Gastrocnemius medialis (tissue), 4 donors: ENCODE measurements at regions of chr10 and their contacts with region 1.

Region 1: GRCh38 chr10:86803156-86803555 is 46.7 kb downstream of the BMPR1A start:
- DNase-seq: no peak
- ATAC-seq: no peak
- H3K4me3 ChIP-seq: no peak overlapping the region
- H3K27ac ChIP-seq: no peak overlapping the region
- H3K4me1 ChIP-seq: peaks cover 28 to 37% of the 10 kb centered on the region in 2 donors
- H3K27me3 ChIP-seq: no peaks in the 10 kb centered on the region
- CTCF ChIP-seq: no peak
- POLR2A ChIP-seq: no peak

Region 2: GRCh38 chr10:86400705-86401587 is 402.2 kb before region 1 on chr10:
- in situ Hi-C with region 1: no loop called
- intact Hi-C with region 1: no loop called
- DNase-seq: no peak
- ATAC-seq: peak in 1 of 2 donors; percentile 10
- H3K4me3 ChIP-seq: peak overlapping the region; percentile 56 to 92 (median 67)
- H3K27ac ChIP-seq: peak overlapping the region in 2 of 4 donors; percentile 48 to 76
- H3K4me1 ChIP-seq: peaks cover 11 to 29% of the 10 kb centered on the region in 2 donors
- H3K27me3 ChIP-seq: peaks cover 5 to 13% (median 10%) of the 10 kb centered on the region in 3 donors
- CTCF ChIP-seq: no peak
- POLR2A ChIP-seq: no peak

Region 3: GRCh38 chr10:86521678-86522509 is 281.3 kb before region 1 on chr10 and contains the start of gene WAPL:
- in situ Hi-C with region 1: no loop called
- intact Hi-C with region 1: no loop called
- DNase-seq: peak; percentile 94 to 95
- ATAC-seq: peak; percentile 90 to 92
- H3K4me3 ChIP-seq: peak within 1 kb of the TSS; percentile 78 to 96 (median 87)
- H3K27ac ChIP-seq: peak within 1 kb of the TSS; percentile 94 to 98 (median 94)
- H3K4me1 ChIP-seq: peaks cover 55 to 58% of the 10 kb centered on the region in 2 donors
- H3K27me3 ChIP-seq: no peaks in the 10 kb centered on the region
- CTCF ChIP-seq: no peak
- POLR2A ChIP-seq: peak; percentile 93 to 96
- total RNA-seq, gene WAPL: 36.9 to 43.4 (median 39.6) TPM

Region 4: GRCh38 chr10:86710987-86711512 is 92.1 kb before region 1 on chr10:
- in situ Hi-C with region 1: no loop called
- intact Hi-C with region 1: loop called (anchors 5 kb)
- DNase-seq: peak; percentile 76 to 90
- ATAC-seq: peak; percentile 69 to 77
- H3K4me3 ChIP-seq: peak overlapping the region; percentile 65 to 90 (median 78)
- H3K27ac ChIP-seq: peak overlapping the region; percentile 91 to 97 (median 96)
- H3K4me1 ChIP-seq: peaks cover 27 to 48% of the 10 kb centered on the region in 2 donors
- H3K27me3 ChIP-seq: no peaks in the 10 kb centered on the region
- CTCF ChIP-seq: peak; percentile 82 to 96 (median 94)
- POLR2A ChIP-seq: peak; percentile 78 to 85